HCT116 (cell line): ENCODE measurements at regions of chr1 and their contacts with region 1.

Region 1: GRCh38 chr1:54488779-54489626 is 59.0 kb upstream of the ACOT11 start:
- DNase-seq: peak; percentile 32
- ATAC-seq: peak; percentile 77
- H3K4me3 ChIP-seq: peak overlapping the region; percentile 60 to 80
- H3K27ac ChIP-seq: peak overlapping the region; percentile 77
- H3K4me1 ChIP-seq: peaks cover 20 to 24% of the 10 kb centered on the region in 2 experiments
- H3K27me3 ChIP-seq: no peaks in the 10 kb centered on the region
- CTCF ChIP-seq: peak; percentile 88 to 98 (median 88)
- POLR2A ChIP-seq: no peak
- RAD21 ChIP-seq: peak; percentile 97

Region 2: DNA sequence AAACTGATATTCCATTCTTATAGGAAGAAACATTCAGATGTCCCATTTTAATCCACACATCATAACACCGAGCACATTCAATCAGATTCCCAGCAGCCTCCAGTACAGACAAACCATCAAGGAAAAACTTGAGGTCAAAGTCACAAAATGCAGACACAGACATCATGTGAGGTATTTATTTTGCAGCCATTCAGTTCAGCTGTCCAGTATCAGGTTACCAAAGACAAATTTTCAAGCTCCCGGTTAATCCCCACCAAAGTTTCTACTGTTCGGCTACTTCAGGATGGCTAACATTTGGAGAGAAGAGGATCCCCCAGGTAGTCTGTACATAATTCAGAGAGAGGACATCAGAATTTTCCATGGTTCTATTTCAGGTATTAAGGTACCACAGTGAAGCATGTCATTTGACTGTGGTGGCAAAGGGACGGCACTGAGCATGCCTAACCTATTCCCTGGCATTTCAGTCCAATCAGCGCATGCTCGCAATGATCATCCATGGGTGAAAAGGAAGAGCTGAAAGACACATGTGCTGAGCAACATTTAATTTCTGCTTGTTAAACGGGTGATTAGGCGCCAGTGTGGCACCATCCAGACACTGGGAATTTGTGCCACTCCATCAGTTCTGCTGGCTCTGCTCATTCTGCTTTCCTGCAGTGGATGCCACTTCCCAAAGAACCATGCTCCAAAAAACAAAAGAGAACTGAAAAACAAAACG is 637.3 kb before region 1 on chr1:
- CTCF ChIA-PET with region 1: no interaction called
- POLR2A ChIA-PET with region 1: no interaction called
- RAD21 ChIA-PET with region 1: no interaction called
- intact Hi-C with region 1: loop called (anchors 10 kb)
- DNase-seq: no peak
- ATAC-seq: no peak
- H3K4me3 ChIP-seq: no peak overlapping the region
- H3K27ac ChIP-seq: no peak overlapping the region
- H3K4me1 ChIP-seq: no peaks in the 10 kb centered on the region
- H3K27me3 ChIP-seq: no peaks in the 10 kb centered on the region
- CTCF ChIP-seq: no peak
- POLR2A ChIP-seq: no peak
- RAD21 ChIP-seq: no peak

Region 3: DNA sequence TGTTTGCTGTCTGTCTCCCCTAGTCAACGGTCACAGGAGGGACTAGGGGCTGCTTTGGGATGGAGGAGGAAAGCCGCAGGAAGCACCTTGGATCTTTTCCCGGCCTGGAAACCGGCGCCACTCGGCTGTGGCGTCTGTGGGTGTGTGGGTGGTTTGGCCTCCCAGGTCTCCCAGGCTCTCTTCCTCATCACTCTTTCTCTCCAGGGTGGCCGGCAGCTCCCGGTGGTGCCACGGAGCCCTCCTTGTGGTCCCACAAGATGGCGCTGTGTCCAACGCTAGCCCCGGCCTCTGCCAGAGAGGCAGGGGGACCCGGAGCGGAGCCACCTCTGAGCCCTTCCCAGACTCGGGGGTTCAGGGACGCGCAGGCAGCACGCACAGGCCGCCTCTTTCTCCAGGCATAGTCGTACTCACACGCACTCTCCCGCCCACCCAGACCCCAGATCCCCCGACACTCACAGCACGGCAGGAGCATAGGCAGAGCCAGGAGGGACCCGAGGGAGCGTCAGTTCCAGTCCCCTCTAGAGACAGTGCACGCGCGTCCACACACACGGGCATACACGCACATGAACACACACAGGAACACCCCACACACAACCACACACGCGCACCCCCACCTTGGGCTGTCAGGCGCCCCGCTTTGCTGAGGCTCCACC is 367.4 kb before region 1 on chr1:
- CTCF ChIA-PET with region 1: interaction called, 9 read pairs
- POLR2A ChIA-PET with region 1: no interaction called
- RAD21 ChIA-PET with region 1: interaction called, 3 to 9 read pairs
- intact Hi-C with region 1: loop called (anchors 1 kb)
- DNase-seq: peak; percentile 29
- ATAC-seq: peak; percentile 93
- H3K4me3 ChIP-seq: peak overlapping the region; percentile 34 to 46
- H3K27ac ChIP-seq: no peak overlapping the region
- H3K4me1 ChIP-seq: peaks cover 2 to 28% of the 10 kb centered on the region in 2 experiments; a peak in 3 of 4 replicates
- H3K27me3 ChIP-seq: no peaks in the 10 kb centered on the region
- CTCF ChIP-seq: peak; percentile 71 to 83 (median 80)
- POLR2A ChIP-seq: no peak
- RAD21 ChIP-seq: peak; percentile 87

Region 4: GRCh38 chr1:54199765-54200518 is 289.1 kb before region 1 on chr1 and contains the starts of genes CYB5RL and MRPL37:
- CTCF ChIA-PET with region 1: interaction called, 3 read pairs
- POLR2A ChIA-PET with region 1: no interaction called
- RAD21 ChIA-PET with region 1: no interaction called
- intact Hi-C with region 1: loop called (anchors 5 kb)
- DNase-seq: peak; percentile 96
- ATAC-seq: peak; percentile 98
- H3K4me3 ChIP-seq: peak within 1 kb of the TSS; percentile 81 to 89
- H3K27ac ChIP-seq: peak within 1 kb of the TSS; percentile 62
- H3K4me1 ChIP-seq: peaks cover 11 to 17% of the 10 kb centered on the region in 2 experiments
- H3K27me3 ChIP-seq: no peaks in the 10 kb centered on the region
- CTCF ChIP-seq: no peak
- POLR2A ChIP-seq: peak; percentile 56
- RAD21 ChIP-seq: no peak
- total RNA-seq, gene CYB5RL: 11.7 TPM
- total RNA-seq, gene MRPL37: 132 TPM

Region 5: DNA sequence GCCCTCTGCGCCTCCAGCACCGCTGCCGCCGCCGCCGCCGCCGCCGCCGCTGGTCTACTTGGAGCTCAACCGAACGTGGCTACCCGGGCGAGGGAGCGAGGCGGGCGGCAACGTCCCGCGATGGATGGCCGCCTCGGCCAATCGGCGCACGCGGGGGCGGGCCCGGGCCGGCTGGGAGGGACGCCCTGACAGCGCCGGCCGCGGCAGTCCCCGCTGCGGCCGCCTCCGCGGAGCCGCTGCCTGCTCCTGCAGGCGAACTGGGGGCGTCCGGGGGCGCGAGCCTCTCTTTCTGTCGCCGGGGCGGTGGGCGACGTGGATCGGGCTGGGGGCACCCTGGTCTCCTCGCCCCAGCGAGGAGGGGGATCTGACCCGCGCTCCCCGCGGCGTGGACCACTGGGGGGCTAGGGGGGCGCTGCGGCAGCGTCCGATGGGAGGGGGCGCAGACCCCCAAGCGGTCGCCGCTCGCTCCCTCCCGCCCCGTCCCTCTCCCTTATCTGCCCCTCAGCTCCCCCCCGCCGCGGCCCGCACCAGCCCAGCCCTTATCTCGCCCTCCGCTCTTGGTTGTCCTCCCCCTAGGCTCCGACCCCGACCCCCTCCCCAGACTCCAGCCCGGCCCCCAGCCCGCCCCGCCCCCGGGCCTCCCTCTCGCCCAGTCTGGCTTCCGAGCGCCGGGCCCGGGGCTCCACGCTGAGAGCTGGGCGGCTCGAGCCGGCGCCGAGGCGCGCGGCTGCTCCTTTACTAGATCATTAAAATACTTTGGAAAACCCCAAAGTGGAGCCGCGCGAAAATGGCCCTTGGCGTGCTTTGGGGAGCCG is 82.5 kb before region 1 on chr1 and contains the start of gene SSBP3:
- CTCF ChIA-PET with region 1: interaction called, 18 read pairs
- POLR2A ChIA-PET with region 1: interaction called, 9 read pairs
- RAD21 ChIA-PET with region 1: interaction called, 4 to 9 read pairs
- intact Hi-C with region 1: loop called (anchors 1 kb)
- DNase-seq: peak; percentile 75
- ATAC-seq: peak; percentile 92
- H3K4me3 ChIP-seq: peak within 1 kb of the TSS; percentile 63 to 70
- H3K27ac ChIP-seq: peak within 1 kb of the TSS; percentile 87
- H3K4me1 ChIP-seq: peaks cover 30 to 41% of the 10 kb centered on the region in 2 experiments
- H3K27me3 ChIP-seq: no peaks in the 10 kb centered on the region
- CTCF ChIP-seq: no peak
- POLR2A ChIP-seq: peak; percentile 31
- RAD21 ChIP-seq: no peak
- total RNA-seq, gene SSBP3: 37.5 TPM

Region 6: GRCh38 chr1:54810100-54810942 is 321.3 kb after region 1 on chr1:
- CTCF ChIA-PET with region 1: interaction called, 3 read pairs
- POLR2A ChIA-PET with region 1: no interaction called
- RAD21 ChIA-PET with region 1: no interaction called
- intact Hi-C with region 1: loop called (anchors 2 kb)
- DNase-seq: peak; percentile 43
- ATAC-seq: peak; percentile 93
- H3K4me3 ChIP-seq: no peak overlapping the region
- H3K27ac ChIP-seq: no peak overlapping the region
- H3K4me1 ChIP-seq: peaks cover 7 to 36% of the 10 kb centered on the region in 2 experiments
- H3K27me3 ChIP-seq: no peaks in the 10 kb centered on the region
- CTCF ChIP-seq: peak; percentile 89 to 92 (median 90)
- POLR2A ChIP-seq: no peak
- RAD21 ChIP-seq: peak; percentile 98